IMR-90 (cell line): ENCODE measurements at regions of chr9 and their contacts with region 1.

Region 1: DNA sequence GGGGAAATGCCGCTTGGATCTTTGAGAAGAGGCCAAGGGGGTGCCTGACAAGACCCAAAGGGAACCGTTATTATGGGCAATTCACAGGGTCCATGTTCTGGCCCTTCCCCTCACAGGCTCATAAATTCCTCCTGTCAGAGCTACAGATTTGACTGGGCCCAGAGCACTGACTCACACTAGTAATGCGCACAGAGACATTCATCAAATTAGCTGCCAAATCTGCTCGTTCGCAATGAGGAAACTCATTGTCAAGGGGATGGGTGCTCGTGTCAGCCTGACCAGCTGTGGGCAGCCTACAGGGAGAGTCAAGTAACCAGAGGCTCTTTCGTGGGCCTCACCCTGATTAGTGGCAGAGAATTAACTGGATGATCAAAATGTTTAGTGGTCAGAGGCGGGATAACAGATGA is 377.4 kb downstream of the ACTL7B start:
- DNase-seq: peak; percentile 90
- ATAC-seq: peak; percentile 56
- H3K4me3 ChIP-seq: no peak overlapping the region
- H3K27ac ChIP-seq: peak overlapping the region; percentile 95
- H3K4me1 ChIP-seq: peaks cover 18% of the 10 kb centered on the region
- H3K27me3 ChIP-seq: no peaks in the 10 kb centered on the region
- CTCF ChIP-seq: no peak
- POLR2A ChIP-seq: no peak
- RAD21 ChIP-seq: no peak

Region 2: GRCh38 chr9:108468402-108468801 is 10.0 kb before region 1 on chr9:
- CTCF ChIA-PET with region 1: interaction called, 11 read pairs
- POLR2A ChIA-PET with region 1: no interaction called
- dilution Hi-C with region 1: no loop called
- in situ Hi-C with region 1: no loop called
- intact Hi-C with region 1: no loop called
- DNase-seq: peak; percentile 23
- ATAC-seq: 0 out of 2 replicates have a peak, but pooled peaks have one; percentile 8
- H3K4me3 ChIP-seq: no peak overlapping the region
- H3K27ac ChIP-seq: no peak overlapping the region
- H3K4me1 ChIP-seq: peaks cover 11% of the 10 kb centered on the region
- H3K27me3 ChIP-seq: no peaks in the 10 kb centered on the region
- CTCF ChIP-seq: peak; percentile 48
- POLR2A ChIP-seq: no peak
- RAD21 ChIP-seq: peak; percentile 40; the same call in 1 of the 2 replicates

Region 3: DNA sequence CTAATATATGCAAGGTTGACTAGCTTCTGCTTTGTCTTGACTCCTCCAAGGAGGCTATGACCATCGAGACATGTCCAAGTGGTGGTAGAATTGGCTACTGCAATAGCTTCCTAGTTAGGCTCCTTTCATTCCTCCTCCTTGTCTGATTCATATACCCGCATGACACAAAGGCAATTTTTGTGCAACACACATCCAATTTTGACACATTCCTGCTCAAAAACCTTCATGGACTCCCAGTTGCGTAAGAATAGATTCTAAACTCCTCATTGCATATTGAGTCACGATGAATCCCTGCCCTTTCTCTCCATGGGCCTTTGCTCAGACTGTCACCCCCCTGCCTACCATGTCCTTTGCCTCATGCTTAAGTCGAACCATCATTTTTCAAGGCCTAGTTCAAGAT is 32.9 kb after region 1 on chr9:
- CTCF ChIA-PET with region 1: no interaction called
- POLR2A ChIA-PET with region 1: no interaction called
- dilution Hi-C with region 1: no loop called
- in situ Hi-C with region 1: no loop called
- intact Hi-C with region 1: loop called (anchors 5 kb)
- DNase-seq: peak; percentile 85
- ATAC-seq: peak; percentile 79
- H3K4me3 ChIP-seq: no peak overlapping the region
- H3K27ac ChIP-seq: no peak overlapping the region
- H3K4me1 ChIP-seq: peaks cover 2% of the 10 kb centered on the region; the same call in 1 of the 2 replicates
- H3K27me3 ChIP-seq: no peaks in the 10 kb centered on the region
- CTCF ChIP-seq: no peak
- POLR2A ChIP-seq: no peak
- RAD21 ChIP-seq: no peak